ENCODE measurements at regions of chr2 and their contacts with region 1.

Region 1: GRCh38 chr2:218395797-218396687 is 3.6 kb upstream of the CTDSP1 start:
- DNase-seq: peak; percentile 84
- ATAC-seq: peak; percentile 65
- H3K4me3 ChIP-seq: peak overlapping the region; percentile 84
- H3K27ac ChIP-seq: peak overlapping the region; percentile 96
- H3K4me1 ChIP-seq: peaks cover 27% of the 10 kb centered on the region
- H3K27me3 ChIP-seq: no peaks in the 10 kb centered on the region
- CTCF ChIP-seq: peak; percentile 75 to 87 (median 80)
- EP300 ChIP-seq: peak; percentile 34 to 72; a peak in 1 of 4 replicates
- POLR2A ChIP-seq: peak; percentile 57
- RAD21 ChIP-seq: peak; percentile 50

Region 2: GRCh38 chr2:218206306-218206705 is 189.7 kb before region 1 on chr2:
- CTCF ChIA-PET with region 1: no interaction called
- POLR2A ChIA-PET with region 1: no interaction called
- RAD21 ChIA-PET with region 1: no interaction called
- SMC1A ChIA-PET with region 1: no interaction called
- in situ Hi-C with region 1: no loop called
- intact Hi-C with region 1: no loop called
- DNase-seq: no peak
- ATAC-seq: no peak
- H3K4me3 ChIP-seq: no peak overlapping the region
- H3K27ac ChIP-seq: no peak overlapping the region
- H3K4me1 ChIP-seq: no peaks in the 10 kb centered on the region
- H3K27me3 ChIP-seq: no peaks in the 10 kb centered on the region; a peak in 1 of 4 replicates
- CTCF ChIP-seq: no peak
- EP300 ChIP-seq: no peak
- POLR2A ChIP-seq: no peak
- RAD21 ChIP-seq: no peak

Region 3: GRCh38 chr2:218216674-218217359 is 179.2 kb before region 1 on chr2 and contains the start of gene ARPC2:
- CTCF ChIA-PET with region 1: no interaction called
- POLR2A ChIA-PET with region 1: interaction called, 3 read pairs
- RAD21 ChIA-PET with region 1: interaction called, 4 read pairs
- SMC1A ChIA-PET with region 1: no interaction called
- in situ Hi-C with region 1: no loop called
- intact Hi-C with region 1: loop called (anchors 5 kb)
- DNase-seq: peak; percentile 75
- ATAC-seq: peak; percentile 78
- H3K4me3 ChIP-seq: peak within 1 kb of the TSS; percentile 93
- H3K27ac ChIP-seq: peak within 1 kb of the TSS; percentile 99
- H3K4me1 ChIP-seq: peaks cover 12% of the 10 kb centered on the region
- H3K27me3 ChIP-seq: no peaks in the 10 kb centered on the region
- CTCF ChIP-seq: no peak
- EP300 ChIP-seq: peak in 1 of 2 experiments; percentile 65; a peak in 3 of 4 replicates
- POLR2A ChIP-seq: peak; percentile 81
- RAD21 ChIP-seq: no peak
- polyA plus RNA-seq, gene ARPC2: 711 to 735 TPM

Region 4: GRCh38 chr2:218286570-218287459 is 109.2 kb before region 1 on chr2:
- CTCF ChIA-PET with region 1: interaction called, 27 read pairs
- POLR2A ChIA-PET with region 1: interaction called, 19 read pairs
- RAD21 ChIA-PET with region 1: interaction called, 14 read pairs
- SMC1A ChIA-PET with region 1: interaction called, 4 read pairs
- in situ Hi-C with region 1: loop called (anchors 25 kb)
- intact Hi-C with region 1: loop called (anchors 2 kb)
- DNase-seq: peak; percentile 72
- ATAC-seq: peak; percentile 76
- H3K4me3 ChIP-seq: peak overlapping the region; percentile 64
- H3K27ac ChIP-seq: peak overlapping the region; percentile 95
- H3K4me1 ChIP-seq: peaks cover 55% of the 10 kb centered on the region
- H3K27me3 ChIP-seq: no peaks in the 10 kb centered on the region
- CTCF ChIP-seq: no peak
- EP300 ChIP-seq: no peak
- POLR2A ChIP-seq: peak; percentile 57; the same call in 1 of the 2 replicates
- RAD21 ChIP-seq: no peak

Region 5: DNA sequence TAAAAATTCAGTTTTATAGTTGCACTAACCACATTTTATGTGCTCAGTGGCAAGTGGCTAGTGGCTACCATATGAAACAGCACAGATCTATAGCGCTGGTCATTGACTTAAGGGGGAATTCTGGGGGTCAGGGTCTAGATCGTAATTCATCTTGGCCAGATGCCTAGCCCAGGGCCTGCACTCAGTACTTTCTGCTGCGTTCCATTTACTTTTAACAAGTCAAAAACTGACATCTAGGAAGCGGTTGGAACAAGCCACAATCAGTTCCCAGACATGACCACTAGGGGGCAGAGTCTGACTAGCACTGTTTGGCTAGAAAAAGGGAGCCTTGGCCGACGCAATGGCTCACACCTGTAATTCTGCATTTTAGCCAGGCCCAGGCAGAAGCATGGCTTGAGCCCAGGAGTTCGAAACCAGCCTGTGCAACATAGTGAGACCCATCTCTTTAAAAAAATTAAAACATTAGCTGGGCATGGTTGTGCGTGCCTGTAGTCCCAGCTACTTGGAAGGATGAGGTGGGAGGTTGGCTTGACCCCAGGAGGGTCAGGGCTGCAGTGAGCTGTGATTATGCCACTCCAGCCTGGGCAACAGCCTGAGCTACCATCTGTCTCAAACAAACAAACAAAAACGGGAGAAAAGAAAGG is 94.7 kb before region 1 on chr2:
- CTCF ChIA-PET with region 1: interaction called, 34 read pairs
- POLR2A ChIA-PET with region 1: interaction called, 3 read pairs
- RAD21 ChIA-PET with region 1: interaction called, 8 read pairs
- SMC1A ChIA-PET with region 1: interaction called, 14 read pairs
- in situ Hi-C with region 1: loop called (anchors 25 kb)
- intact Hi-C with region 1: loop called (anchors 1 kb)
- DNase-seq: peak; percentile 82
- ATAC-seq: peak; percentile 97
- H3K4me3 ChIP-seq: no peak overlapping the region
- H3K27ac ChIP-seq: no peak overlapping the region
- H3K4me1 ChIP-seq: no peaks in the 10 kb centered on the region
- H3K27me3 ChIP-seq: no peaks in the 10 kb centered on the region
- CTCF ChIP-seq: peak; percentile 90 to 93 (median 92)
- EP300 ChIP-seq: no peak
- POLR2A ChIP-seq: no peak
- RAD21 ChIP-seq: peak; percentile 97

Region 6: GRCh38 chr2:218360447-218360846 is 35.6 kb before region 1 on chr2:
- CTCF ChIA-PET with region 1: interaction called, 4 read pairs
- POLR2A ChIA-PET with region 1: interaction called, 3 read pairs
- RAD21 ChIA-PET with region 1: interaction called, 6 read pairs
- SMC1A ChIA-PET with region 1: interaction called, 3 read pairs
- in situ Hi-C with region 1: no loop called
- intact Hi-C with region 1: loop called (anchors 5 kb)
- DNase-seq: no peak
- ATAC-seq: no peak
- H3K4me3 ChIP-seq: no peak overlapping the region
- H3K27ac ChIP-seq: no peak overlapping the region
- H3K4me1 ChIP-seq: peaks cover 7% of the 10 kb centered on the region
- H3K27me3 ChIP-seq: no peaks in the 10 kb centered on the region
- CTCF ChIP-seq: no peak
- EP300 ChIP-seq: no peak
- POLR2A ChIP-seq: no peak
- RAD21 ChIP-seq: no peak

Region 7: GRCh38 chr2:218466016-218466521 is 70.0 kb after region 1 on chr2:
- CTCF ChIA-PET with region 1: interaction called, 10 read pairs
- POLR2A ChIA-PET with region 1: no interaction called
- RAD21 ChIA-PET with region 1: interaction called, 3 read pairs
- SMC1A ChIA-PET with region 1: interaction called, 3 read pairs
- in situ Hi-C with region 1: no loop called
- intact Hi-C with region 1: no loop called
- DNase-seq: no peak
- ATAC-seq: peak; percentile 41; the same call in 1 of the 3 replicates
- H3K4me3 ChIP-seq: no peak overlapping the region
- H3K27ac ChIP-seq: no peak overlapping the region
- H3K4me1 ChIP-seq: no peaks in the 10 kb centered on the region
- H3K27me3 ChIP-seq: no peaks in the 10 kb centered on the region
- CTCF ChIP-seq: peak; percentile 14 to 42 (median 38); a peak in 3 of 6 replicates
- EP300 ChIP-seq: no peak
- POLR2A ChIP-seq: no peak
- RAD21 ChIP-seq: no peak

Region 8: DNA sequence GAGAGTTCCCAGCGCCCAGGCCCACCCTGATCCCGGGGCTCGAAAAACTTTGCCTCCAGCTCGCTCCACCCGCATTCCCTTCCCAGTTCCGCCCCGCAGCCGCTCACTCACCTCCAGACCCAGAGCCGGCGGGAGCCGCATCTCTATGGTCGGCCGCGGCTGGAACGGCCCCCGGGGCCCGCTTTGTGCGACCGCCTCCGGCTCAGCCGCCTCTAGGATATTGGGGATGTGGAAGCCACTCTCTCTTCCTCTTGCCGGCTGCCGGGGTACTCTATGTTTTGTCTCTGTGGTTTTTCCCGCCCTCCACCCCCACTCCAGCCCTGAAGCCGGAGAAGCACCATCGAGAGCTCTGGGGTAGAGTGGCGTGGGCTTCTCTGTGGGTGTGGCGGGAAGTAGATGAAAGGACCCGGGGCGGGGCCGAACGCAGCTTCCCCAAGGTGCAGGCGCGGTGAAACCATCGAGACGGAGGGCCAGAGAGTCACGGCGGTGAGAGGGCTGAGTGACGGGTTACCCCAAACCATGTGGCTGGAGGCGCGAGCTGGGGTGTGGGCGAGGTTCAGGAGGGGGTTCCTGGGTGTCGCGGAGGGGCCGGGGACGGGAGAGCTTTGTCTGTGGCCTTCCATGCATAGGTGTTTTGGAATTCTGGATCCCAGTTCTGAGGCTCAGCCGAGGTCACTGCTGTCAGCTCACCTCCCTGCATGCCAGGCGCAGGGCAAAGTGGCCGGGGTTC is 263.4 kb after region 1 on chr2 and contains the starts of genes BCS1L and ZNF142:
- CTCF ChIA-PET with region 1: no interaction called
- POLR2A ChIA-PET with region 1: no interaction called
- RAD21 ChIA-PET with region 1: interaction called, 3 read pairs
- SMC1A ChIA-PET with region 1: no interaction called
- in situ Hi-C with region 1: no loop called
- intact Hi-C with region 1: loop called (anchors 5 kb)
- DNase-seq: peak; percentile 71
- ATAC-seq: peak; percentile 97
- H3K4me3 ChIP-seq: peak within 1 kb of the TSS; percentile 96
- H3K27ac ChIP-seq: peak within 1 kb of the TSS; percentile 73
- H3K4me1 ChIP-seq: peaks cover 18% of the 10 kb centered on the region
- H3K27me3 ChIP-seq: no peaks in the 10 kb centered on the region
- CTCF ChIP-seq: no peak
- EP300 ChIP-seq: peak in 1 of 2 experiments; percentile 31; a peak in 1 of 4 replicates
- POLR2A ChIP-seq: peak; percentile 91
- RAD21 ChIP-seq: no peak
- polyA plus RNA-seq, gene BCS1L: 77.1 to 77.8 TPM
- polyA plus RNA-seq, gene ZNF142: 1.3 to 2.4 TPM

Region 9: GRCh38 chr2:218860950-218861381 is 464.9 kb after region 1 on chr2:
- CTCF ChIA-PET with region 1: no interaction called
- POLR2A ChIA-PET with region 1: no interaction called
- RAD21 ChIA-PET with region 1: no interaction called
- SMC1A ChIA-PET with region 1: no interaction called
- in situ Hi-C with region 1: no loop called
- intact Hi-C with region 1: no loop called
- DNase-seq: no peak
- ATAC-seq: peak; percentile 18; the same call in 1 of the 3 replicates
- H3K4me3 ChIP-seq: no peak overlapping the region
- H3K27ac ChIP-seq: no peak overlapping the region
- H3K4me1 ChIP-seq: no peaks in the 10 kb centered on the region
- H3K27me3 ChIP-seq: peaks cover 17 to 24% of the 10 kb centered on the region in 2 experiments
- CTCF ChIP-seq: no peak
- EP300 ChIP-seq: no peak
- POLR2A ChIP-seq: no peak
- RAD21 ChIP-seq: no peak

Measured in GM12878 (cell line).